Activated CD4-positive, alpha-beta memory T cell treated with anti-CD3 and anti-CD28 coated beads, Interleukin-2, amount 10 ng/mL, durations not matched to agents 7 days and 5 days (primary cell): ENCODE measurements at regions of chr11 and their contacts with region 1.

Region 1: GRCh38 chr11:64846998-64847666 is 2.7 kb upstream of the CDC42BPG start:
- DNase-seq: peak; percentile 92
- H3K4me3 Mint-ChIP-seq: no peak overlapping the region
- H3K27ac Mint-ChIP-seq: no peak overlapping the region
- H3K4me1 Mint-ChIP-seq: peaks cover 54% of the 10 kb centered on the region
- H3K27me3 Mint-ChIP-seq: no peaks in the 10 kb centered on the region

Region 2: DNA sequence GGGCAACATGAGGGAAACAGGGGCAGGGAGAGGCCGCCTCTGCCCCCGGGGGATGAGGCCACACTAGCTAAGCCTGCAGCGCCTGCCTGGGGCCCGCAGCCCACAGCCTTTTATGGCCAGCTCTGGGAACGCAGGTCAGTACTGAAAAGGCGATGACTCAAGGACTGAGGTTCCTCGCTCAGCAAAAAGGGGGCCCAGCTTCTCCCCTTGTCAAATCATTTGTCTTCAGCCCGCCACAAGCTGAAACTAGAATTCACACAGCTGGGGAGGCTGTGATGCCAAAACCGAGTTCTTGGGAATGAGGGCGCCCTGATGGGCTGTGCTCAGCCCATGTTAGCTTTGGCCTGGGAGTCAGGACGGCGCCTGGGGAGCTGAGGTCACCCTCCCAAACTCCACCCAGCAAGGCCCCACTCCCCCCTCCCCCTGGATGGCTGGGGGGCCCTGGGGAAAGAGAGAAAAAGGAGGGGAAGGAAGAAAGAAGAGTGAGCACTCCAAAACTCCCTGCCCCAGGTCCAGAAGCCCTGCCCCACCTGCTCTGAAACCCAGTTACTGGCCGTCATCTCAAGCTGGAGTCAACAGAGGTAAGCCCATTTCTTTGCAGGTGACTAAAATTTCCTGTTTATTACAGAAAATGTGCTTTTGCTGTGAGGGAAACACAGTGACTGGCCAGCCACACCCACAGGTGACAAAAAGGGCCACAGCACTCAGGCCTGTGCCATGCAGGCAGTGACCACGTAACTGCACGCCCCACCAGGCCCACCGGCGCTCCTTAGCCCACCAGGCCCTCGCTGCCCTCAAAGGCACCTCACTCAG is 17.5 kb after region 1 on chr11:
- CTCF ChIA-PET with region 1: interaction called, 155 read pairs
- POLR2A ChIA-PET with region 1: interaction called, 324 read pairs
- DNase-seq: no peak
- H3K4me3 Mint-ChIP-seq: peak overlapping the region; percentile 68
- H3K27ac Mint-ChIP-seq: peak overlapping the region; percentile 98
- H3K4me1 Mint-ChIP-seq: peaks cover 92% of the 10 kb centered on the region
- H3K27me3 Mint-ChIP-seq: no peaks in the 10 kb centered on the region

Region 3: GRCh38 chr11:64878494-64879243 is 31.5 kb after region 1 on chr11 and contains the start of gene EHD1:
- CTCF ChIA-PET with region 1: interaction called, 957 read pairs
- POLR2A ChIA-PET with region 1: interaction called, 1,068 read pairs
- DNase-seq: peak; percentile 100
- H3K4me3 Mint-ChIP-seq: peak within 1 kb of the TSS; percentile 94
- H3K27ac Mint-ChIP-seq: peak within 1 kb of the TSS; percentile 91
- H3K4me1 Mint-ChIP-seq: peaks cover 55% of the 10 kb centered on the region
- H3K27me3 Mint-ChIP-seq: no peaks in the 10 kb centered on the region
- total RNA-seq, gene EHD1: 138 to 146 TPM

Region 4: GRCh38 chr11:64935359-64936081 is 88.4 kb after region 1 on chr11 and contains the start of gene GPHA2:
- CTCF ChIA-PET with region 1: no interaction called
- POLR2A ChIA-PET with region 1: no interaction called
- DNase-seq: no peak
- H3K4me3 Mint-ChIP-seq: no peak within 1 kb of the TSS
- H3K27ac Mint-ChIP-seq: no peak within 1 kb of the TSS
- H3K4me1 Mint-ChIP-seq: no peaks in the 10 kb centered on the region
- H3K27me3 Mint-ChIP-seq: peaks cover 5% of the 10 kb centered on the region
- total RNA-seq, gene GPHA2: not detected

Region 5: GRCh38 chr11:65090628-65091027 is 243.5 kb after region 1 on chr11:
- CTCF ChIA-PET with region 1: no interaction called
- POLR2A ChIA-PET with region 1: no interaction called
- DNase-seq: no peak
- H3K4me3 Mint-ChIP-seq: no peak overlapping the region
- H3K27ac Mint-ChIP-seq: no peak overlapping the region
- H3K4me1 Mint-ChIP-seq: peaks cover 5% of the 10 kb centered on the region
- H3K27me3 Mint-ChIP-seq: no peaks in the 10 kb centered on the region